ENCODE measurements at regions of chr4 and their contacts with region 1.

Region 1: GRCh38 chr4:99563310-99564186 is at the start of gene TRMT10A:
- DNase-seq: peak; percentile 99
- H3K4me3 ChIP-seq: peak within 1 kb of the TSS; percentile 12 to 56 (median 48)
- H3K27ac ChIP-seq: peak within 1 kb of the TSS; percentile 94 to 96 (median 96)
- H3K4me1 ChIP-seq: peaks cover 3 to 5% of the 10 kb centered on the region in 2 donors
- H3K27me3 ChIP-seq: no peaks in the 10 kb centered on the region
- CTCF ChIP-seq: peak in 3 of 6 experiments; percentile 2 to 24 (median 16)
- POLR2A ChIP-seq: peak in 1 of 2 donors; percentile 83
- total RNA-seq, gene TRMT10A: 4.6 to 12.5 (median 6.8) TPM

Region 2: GRCh38 chr4:98950925-98951324 is 612.6 kb before region 1 on chr4:
- intact Hi-C with region 1: no loop called
- DNase-seq: no peak
- H3K4me3 ChIP-seq: no peak overlapping the region
- H3K27ac ChIP-seq: no peak overlapping the region
- H3K4me1 ChIP-seq: no peaks in the 10 kb centered on the region
- H3K27me3 ChIP-seq: no peaks in the 10 kb centered on the region
- CTCF ChIP-seq: no peak
- POLR2A ChIP-seq: no peak

Region 3: GRCh38 chr4:99894161-99894997 is 330.8 kb after region 1 on chr4 and contains the start of gene LAMTOR3:
- intact Hi-C with region 1: loop called (anchors 5 kb)
- DNase-seq: peak; percentile 91
- H3K4me3 ChIP-seq: peak within 1 kb of the TSS; percentile 83 to 99 (median 99)
- H3K27ac ChIP-seq: peak within 1 kb of the TSS; percentile 75 to 83 (median 80)
- H3K4me1 ChIP-seq: peaks cover 8 to 15% of the 10 kb centered on the region in 2 donors
- H3K27me3 ChIP-seq: no peaks in the 10 kb centered on the region
- CTCF ChIP-seq: no peak
- POLR2A ChIP-seq: peak in 1 of 2 donors; percentile 48
- total RNA-seq, gene LAMTOR3: 67.5 to 103 (median 86.1) TPM

Measured in thyroid gland (tissue), 4 donors.